AG04450 (cell line): ENCODE measurements at regions of chr2 and their contacts with region 1.

Region 1: GRCh38 chr2:112749755-112750559 is 14.5 kb downstream of the CKAP2L start:
- DNase-seq: peak; percentile 52
- H3K4me3 ChIP-seq: no peak overlapping the region
- H3K27ac ChIP-seq: peak overlapping the region; percentile 47
- H3K27me3 ChIP-seq: no peaks in the 10 kb centered on the region
- CTCF ChIP-seq: peak; percentile 99

Region 2: GRCh38 chr2:112737542-112738232 is 12.3 kb before region 1 on chr2:
- CTCF ChIA-PET with region 1: interaction called, 50 read pairs
- POLR2A ChIA-PET with region 1: no interaction called
- DNase-seq: no peak
- H3K4me3 ChIP-seq: no peak overlapping the region
- H3K27ac ChIP-seq: no peak overlapping the region
- H3K27me3 ChIP-seq: no peaks in the 10 kb centered on the region
- CTCF ChIP-seq: no peak

Region 3: DNA sequence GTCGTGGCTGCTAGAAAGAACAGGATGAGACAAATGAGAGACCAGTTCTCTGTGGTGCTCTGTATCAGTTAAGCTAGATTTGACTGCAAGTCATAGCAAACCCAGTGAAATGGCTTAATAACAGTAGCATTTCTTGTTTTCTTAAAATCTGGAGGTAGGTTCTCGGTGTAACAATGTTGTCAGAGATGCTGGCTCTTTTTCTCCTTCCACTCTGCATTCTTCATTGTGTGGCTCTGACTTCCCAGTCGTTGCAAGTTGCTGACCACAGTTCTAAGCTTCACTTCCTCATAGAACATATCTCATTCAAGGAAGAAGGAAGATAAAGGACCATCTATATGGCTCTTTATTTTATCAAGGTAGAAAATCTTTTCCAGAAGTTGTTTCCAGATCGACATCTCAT is 22.4 kb after region 1 on chr2:
- CTCF ChIA-PET with region 1: interaction called, 11 read pairs
- POLR2A ChIA-PET with region 1: no interaction called
- DNase-seq: no peak
- H3K4me3 ChIP-seq: no peak overlapping the region
- H3K27ac ChIP-seq: no peak overlapping the region
- H3K27me3 ChIP-seq: no peaks in the 10 kb centered on the region
- CTCF ChIP-seq: no peak

Region 4: GRCh38 chr2:112884869-112885505 is 135.0 kb after region 1 on chr2:
- CTCF ChIA-PET with region 1: interaction called, 38 read pairs
- POLR2A ChIA-PET with region 1: no interaction called
- DNase-seq: no peak
- H3K4me3 ChIP-seq: no peak overlapping the region
- H3K27ac ChIP-seq: no peak overlapping the region
- H3K27me3 ChIP-seq: no peaks in the 10 kb centered on the region
- CTCF ChIP-seq: peak; percentile 64

Region 5: DNA sequence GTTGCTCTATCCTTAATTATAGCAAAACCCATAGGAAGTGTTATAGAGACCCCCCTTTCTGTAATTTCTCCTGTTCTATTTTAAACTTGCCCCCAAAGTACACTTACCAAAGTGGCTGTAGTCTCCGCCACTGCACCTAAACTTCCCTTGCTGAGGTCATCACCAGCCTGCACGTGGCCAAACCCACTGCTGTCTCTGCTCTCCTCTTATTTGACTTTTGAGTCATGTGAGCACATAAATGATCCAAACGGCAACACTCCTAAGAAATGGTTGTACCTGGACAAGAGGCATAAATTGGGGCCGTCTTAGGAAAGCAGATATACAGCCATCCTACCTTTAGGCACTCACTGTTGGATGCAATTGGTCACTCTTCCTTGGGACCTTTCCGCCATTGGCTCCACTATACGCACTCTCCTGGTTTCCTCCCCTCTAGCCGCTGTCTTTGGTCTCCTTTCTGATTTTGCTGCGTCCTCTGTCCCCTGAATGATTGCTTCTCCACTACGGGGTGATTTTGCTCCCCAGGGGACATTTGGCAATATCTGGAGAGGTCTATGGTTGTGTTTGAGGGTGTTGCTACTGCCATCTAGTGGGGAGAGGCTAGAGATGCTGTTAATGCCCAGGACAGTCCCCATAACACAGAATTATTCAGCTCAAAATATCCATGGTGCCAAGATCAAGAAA is 208.6 kb after region 1 on chr2:
- CTCF ChIA-PET with region 1: interaction called, 74 read pairs
- POLR2A ChIA-PET with region 1: no interaction called
- DNase-seq: peak; percentile 30
- H3K4me3 ChIP-seq: no peak overlapping the region
- H3K27ac ChIP-seq: no peak overlapping the region
- H3K27me3 ChIP-seq: peaks cover 25% of the 10 kb centered on the region
- CTCF ChIP-seq: peak; percentile 89